Calu3 (cell line): ENCODE measurements at regions of chr12 and their contacts with region 1.

Region 1: DNA sequence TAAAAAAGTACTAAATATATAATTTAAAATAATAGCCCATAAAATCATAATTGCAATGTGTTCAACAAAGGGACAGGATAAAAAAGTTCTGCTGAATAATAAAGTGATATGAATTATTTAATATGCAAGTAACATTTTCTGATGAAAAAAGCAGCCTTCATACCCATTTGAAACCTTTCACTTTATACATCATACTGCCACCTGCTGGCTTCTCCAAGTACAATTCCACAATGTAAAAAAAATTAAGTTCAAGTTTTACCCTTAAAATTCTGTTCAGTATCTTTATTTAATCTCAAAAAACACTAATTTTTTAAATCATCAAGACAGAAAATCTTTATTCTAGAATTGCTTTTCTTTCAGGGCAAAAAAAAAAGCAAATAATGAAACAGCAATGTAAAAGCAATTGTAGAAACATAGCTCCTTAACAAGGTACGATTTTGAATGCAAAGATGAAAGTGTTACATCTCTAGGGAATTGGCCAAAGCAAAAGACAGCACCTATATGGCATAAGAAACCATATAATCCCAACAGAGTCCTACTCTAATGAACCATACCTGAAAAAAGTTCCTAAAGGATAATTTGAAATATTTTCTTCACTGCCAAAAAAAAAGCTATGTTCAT is 15.0 kb downstream of the MDM1 start:
- DNase-seq: peak; percentile 35
- H3K4me3 Mint-ChIP-seq: no peak overlapping the region
- H3K27ac Mint-ChIP-seq: no peak overlapping the region
- H3K4me1 Mint-ChIP-seq: no peaks in the 10 kb centered on the region
- H3K27me3 Mint-ChIP-seq: no peaks in the 10 kb centered on the region
- CTCF ChIP-seq: no peak

Region 2: GRCh38 chr12:68040450-68041075 is 276.6 kb before region 1 on chr12:
- CTCF ChIA-PET with region 1: no interaction called
- intact Hi-C with region 1: loop called (anchors 1 kb)
- DNase-seq: peak; percentile 74
- H3K4me3 Mint-ChIP-seq: no peak overlapping the region
- H3K27ac Mint-ChIP-seq: no peak overlapping the region
- H3K4me1 Mint-ChIP-seq: no peaks in the 10 kb centered on the region
- H3K27me3 Mint-ChIP-seq: no peaks in the 10 kb centered on the region
- CTCF ChIP-seq: peak; percentile 82

Region 3: DNA sequence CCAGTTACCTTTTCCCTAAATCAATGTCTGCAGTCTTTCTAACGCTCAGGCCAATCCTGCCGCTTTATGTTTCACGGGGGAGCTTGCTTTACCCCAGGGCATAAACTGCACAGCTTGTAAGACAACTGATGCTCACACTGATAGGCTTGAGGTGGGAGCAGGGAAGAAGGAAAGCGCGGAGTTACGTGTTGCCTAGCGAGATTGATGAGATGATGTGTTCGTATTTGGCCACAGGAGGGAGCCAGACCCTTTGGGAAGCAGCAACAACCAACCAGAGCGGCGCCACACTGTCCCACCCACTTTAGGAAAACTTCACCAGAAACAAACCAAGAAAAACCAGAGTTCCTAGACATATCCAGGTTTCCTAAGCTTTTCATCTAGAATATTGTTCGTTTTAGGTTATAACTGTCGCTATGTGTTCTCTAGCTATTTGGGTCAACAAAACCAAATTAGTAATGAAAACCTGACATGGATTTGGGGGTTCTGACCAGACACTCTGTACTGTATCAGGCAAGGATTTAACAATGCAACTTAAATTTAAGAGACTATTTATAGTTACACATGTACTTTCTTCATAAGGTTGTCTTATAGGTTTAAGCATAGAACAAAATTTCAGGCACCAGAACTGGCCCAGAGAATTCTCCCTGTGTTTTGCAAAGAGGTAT is 93.9 kb before region 1 on chr12:
- CTCF ChIA-PET with region 1: interaction called, 8 read pairs
- intact Hi-C with region 1: loop called (anchors 1 kb)
- DNase-seq: peak; percentile 82
- H3K4me3 Mint-ChIP-seq: no peak overlapping the region
- H3K27ac Mint-ChIP-seq: no peak overlapping the region
- H3K4me1 Mint-ChIP-seq: no peaks in the 10 kb centered on the region
- H3K27me3 Mint-ChIP-seq: peaks cover 30% of the 10 kb centered on the region
- CTCF ChIP-seq: peak; percentile 83

Region 4: GRCh38 chr12:68400226-68400829 is 83.2 kb after region 1 on chr12:
- CTCF ChIA-PET with region 1: no interaction called
- intact Hi-C with region 1: no loop called
- DNase-seq: no peak
- H3K4me3 Mint-ChIP-seq: no peak overlapping the region
- H3K27ac Mint-ChIP-seq: no peak overlapping the region
- H3K4me1 Mint-ChIP-seq: peaks cover 2% of the 10 kb centered on the region
- H3K27me3 Mint-ChIP-seq: peaks cover 20% of the 10 kb centered on the region
- CTCF ChIP-seq: no peak